ENCODE measurements at regions of chr19 and their contacts with region 1.

Region 1: GRCh38 chr19:7515645-7516151 is at the start of gene ZNF358:
- DNase-seq: peak; percentile 41
- H3K4me3 ChIP-seq: peak within 1 kb of the TSS; percentile 72 to 75
- H3K27ac ChIP-seq: peak within 1 kb of the TSS; percentile 87
- H3K4me1 ChIP-seq: no peaks in the 10 kb centered on the region
- H3K27me3 ChIP-seq: no peaks in the 10 kb centered on the region
- CTCF ChIP-seq: no peak
- POLR2A ChIP-seq: no peak
- total RNA-seq, gene ZNF358: 104 to 116 TPM

Region 2: GRCh38 chr19:7293795-7294570 is 221.7 kb before region 1 on chr19 and contains the start of gene INSR:
- intact Hi-C with region 1: no loop called
- DNase-seq: peak; percentile 87
- H3K4me3 ChIP-seq: peak within 1 kb of the TSS; percentile 99 to 100
- H3K27ac ChIP-seq: peak within 1 kb of the TSS; percentile 90
- H3K4me1 ChIP-seq: no peaks in the 10 kb centered on the region
- H3K27me3 ChIP-seq: no peaks in the 10 kb centered on the region
- CTCF ChIP-seq: no peak
- POLR2A ChIP-seq: peak; percentile 73
- total RNA-seq, gene INSR: 51.2 to 124 TPM

Region 3: GRCh38 chr19:7488736-7489353 is 26.9 kb before region 1 on chr19 and contains the start of gene PEX11G:
- intact Hi-C with region 1: loop called (anchors 2 kb)
- DNase-seq: peak; percentile 83
- H3K4me3 ChIP-seq: peak within 1 kb of the TSS; percentile 42 to 59
- H3K27ac ChIP-seq: peak within 1 kb of the TSS; percentile 84
- H3K4me1 ChIP-seq: no peaks in the 10 kb centered on the region
- H3K27me3 ChIP-seq: no peaks in the 10 kb centered on the region
- CTCF ChIP-seq: peak in 2 of 4 experiments; percentile 6 to 30
- POLR2A ChIP-seq: peak; percentile 82
- total RNA-seq, gene PEX11G: 13.1 to 17.4 TPM

Measured in prostate gland (tissue), 2 donors.